Heart right ventricle (tissue), 16 donors: ENCODE measurements at regions of chr3 and their contacts with region 1.

Region 1: GRCh38 chr3:30524357-30525040 is 81.9 kb upstream of the TGFBR2 start:
- DNase-seq: no peak
- ATAC-seq: peak in 1 of 8 donors; percentile 12
- H3K4me3 ChIP-seq: no peak overlapping the region
- H3K27ac ChIP-seq: no peak overlapping the region
- H3K4me1 ChIP-seq: peaks cover 0 to 50% (median 27%) of the 10 kb centered on the region in 9 donors
- H3K27me3 ChIP-seq: no peaks in the 10 kb centered on the region
- CTCF ChIP-seq: no peak

Region 2: DNA sequence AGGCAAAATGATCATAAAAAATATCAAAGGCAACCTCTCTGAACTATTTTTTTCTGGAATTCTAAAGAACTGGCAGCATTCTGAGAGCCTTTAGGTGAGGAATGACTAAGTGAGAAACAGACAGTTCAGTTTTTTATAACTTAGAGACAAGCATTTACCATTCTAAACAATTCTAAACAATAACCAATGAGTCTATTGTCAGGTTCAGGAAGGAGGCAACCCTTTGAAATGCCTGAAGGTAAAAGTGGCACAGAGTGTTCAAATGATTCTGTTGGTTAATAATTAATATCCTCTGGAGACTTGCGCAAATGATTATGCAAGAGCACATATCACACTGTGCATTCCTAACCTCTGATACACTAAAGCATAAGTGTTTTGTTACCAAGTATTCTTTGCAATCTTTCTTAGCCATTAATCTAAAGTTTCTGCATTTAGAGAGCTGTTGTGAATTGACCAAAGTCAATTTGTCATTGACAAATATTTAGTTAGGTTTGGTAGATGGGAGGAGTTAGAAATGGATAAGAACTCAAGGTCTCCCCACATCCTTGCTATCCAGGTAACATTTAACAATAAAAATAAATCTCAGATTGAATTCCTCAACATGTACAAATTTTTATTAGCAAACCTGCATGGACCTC is 72.8 kb after region 1 on chr3:
- intact Hi-C with region 1: loop called in 2 of 10 experiments (anchors 5 to 10 kb)
- DNase-seq: no peak
- ATAC-seq: peak in 7 of 8 donors; percentile 39 to 97 (median 84)
- H3K4me3 ChIP-seq: no peak overlapping the region
- H3K27ac ChIP-seq: peak overlapping the region in 9 of 10 donors; percentile 1 to 50 (median 31)
- H3K4me1 ChIP-seq: peaks cover 0 to 21% (median 10%) of the 10 kb centered on the region in 9 donors
- H3K27me3 ChIP-seq: no peaks in the 10 kb centered on the region
- CTCF ChIP-seq: no peak

Region 3: GRCh38 chr3:30611613-30612436 is 87.3 kb after region 1 on chr3:
- intact Hi-C with region 1: loop called in 3 of 10 experiments (anchors 5 to 10 kb)
- DNase-seq: no peak
- ATAC-seq: no peak
- H3K4me3 ChIP-seq: peak overlapping the region in 2 of 10 donors; percentile 1 to 89
- H3K27ac ChIP-seq: peak overlapping the region in 6 of 10 donors; percentile 32 to 100 (median 99)
- H3K4me1 ChIP-seq: peaks cover 12 to 90% (median 84%) of the 10 kb centered on the region in 9 donors
- H3K27me3 ChIP-seq: no peaks in the 10 kb centered on the region
- CTCF ChIP-seq: no peak

Region 4: GRCh38 chr3:30658328-30659052 is 134.0 kb after region 1 on chr3:
- intact Hi-C with region 1: loop called in 1 of 10 experiments (anchors 10 kb)
- DNase-seq: peak in 1 of 2 donors; percentile 50
- ATAC-seq: peak; percentile 45 to 75 (median 69)
- H3K4me3 ChIP-seq: peak overlapping the region in 1 of 10 donors; percentile 16
- H3K27ac ChIP-seq: peak overlapping the region; percentile 20 to 82 (median 69)
- H3K4me1 ChIP-seq: peaks cover 18 to 100% (median 96%) of the 10 kb centered on the region in 9 donors
- H3K27me3 ChIP-seq: no peaks in the 10 kb centered on the region
- CTCF ChIP-seq: peak in 3 of 9 donors; percentile 23 to 29 (median 24)